Right cardiac atrium (tissue), 5 donors: ENCODE measurements at regions of chr20 and their contacts with region 1.

Region 1: DNA sequence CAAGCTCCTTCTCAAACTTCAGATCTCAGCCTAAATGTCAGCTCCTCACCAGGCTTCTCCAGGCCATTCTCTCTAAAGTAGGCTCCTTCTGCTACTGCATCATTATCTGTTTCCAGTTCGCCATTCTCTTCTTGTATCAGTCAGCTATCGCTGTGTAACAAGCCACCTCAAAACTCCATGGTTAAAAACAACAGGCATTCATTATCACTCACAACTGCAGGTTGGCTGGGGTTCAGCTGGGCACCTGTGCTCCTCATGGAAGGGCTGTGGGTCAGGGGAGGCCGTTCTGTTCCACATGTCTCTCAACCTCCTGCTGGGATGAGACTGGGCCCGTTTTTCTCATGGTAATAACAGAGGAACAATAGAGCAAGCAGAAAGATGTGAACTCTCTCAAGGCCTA is 28.7 kb downstream of the PRND start:
- DNase-seq: no peak
- ATAC-seq: no peak
- H3K4me3 ChIP-seq: no peak overlapping the region
- H3K27ac ChIP-seq: no peak overlapping the region
- H3K4me1 ChIP-seq: no peaks in the 10 kb centered on the region
- H3K27me3 ChIP-seq: no peaks in the 10 kb centered on the region

Region 2: GRCh38 chr20:5090191-5090590 is 339.8 kb after region 1 on chr20:
- intact Hi-C with region 1: loop called in 1 of 4 experiments (anchors 10 kb)
- DNase-seq: no peak
- ATAC-seq: peak; percentile 70 to 78
- H3K4me3 ChIP-seq: no peak overlapping the region
- H3K27ac ChIP-seq: no peak overlapping the region
- H3K4me1 ChIP-seq: no peaks in the 10 kb centered on the region
- H3K27me3 ChIP-seq: no peaks in the 10 kb centered on the region

Region 3: GRCh38 chr20:5215672-5216304 is 465.4 kb after region 1 on chr20:
- intact Hi-C with region 1: loop called in 1 of 4 experiments (anchors 10 kb)
- DNase-seq: no peak
- ATAC-seq: peak in 1 of 2 donors; percentile 15
- H3K4me3 ChIP-seq: no peak overlapping the region
- H3K27ac ChIP-seq: peak overlapping the region; percentile 26
- H3K4me1 ChIP-seq: peaks cover 6% of the 10 kb centered on the region
- H3K27me3 ChIP-seq: no peaks in the 10 kb centered on the region